ENCODE measurements at regions of chr1 and their contacts with region 1.

Region 1: DNA sequence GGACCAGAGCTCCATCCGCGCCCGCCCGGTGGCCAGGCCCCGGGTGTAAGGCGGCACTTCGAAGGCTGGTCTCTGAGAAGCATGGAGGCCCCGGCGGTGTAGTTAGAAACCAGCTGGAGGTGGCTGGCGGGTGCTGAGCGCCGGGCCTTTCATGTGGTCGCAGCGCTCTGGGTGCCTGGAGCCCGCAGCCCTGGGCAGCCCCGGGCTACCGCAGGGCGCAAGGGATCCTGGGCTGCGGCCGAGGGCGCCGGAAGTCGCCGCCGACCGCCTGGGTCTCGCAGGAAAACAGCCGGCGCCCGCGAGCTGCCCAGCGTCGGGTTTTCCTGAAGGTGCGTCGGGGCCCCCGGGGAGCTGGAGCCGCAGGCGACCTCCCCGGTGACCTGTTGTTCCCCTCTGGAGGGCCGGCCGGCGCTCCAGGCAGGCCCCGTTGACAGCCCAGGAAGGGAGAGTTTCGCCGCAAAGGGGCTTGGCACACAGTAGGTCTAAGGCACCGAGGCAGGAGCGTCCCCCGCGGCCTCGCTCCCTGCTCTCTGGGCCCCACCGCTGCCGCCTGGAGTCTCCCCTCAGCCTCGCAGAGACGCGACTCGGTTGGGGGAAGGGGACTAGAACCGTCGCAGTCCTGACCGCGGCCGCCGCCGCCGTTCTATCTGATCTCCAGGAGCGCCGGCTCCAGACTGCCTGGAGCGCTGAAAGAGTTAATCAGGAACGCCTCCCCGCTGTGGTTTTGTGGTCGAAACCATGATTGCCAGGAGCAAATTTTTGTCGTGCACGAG is 2.7 kb downstream of the GRHL3 start:
- DNase-seq: peak; percentile 83
- H3K4me3 Mint-ChIP-seq: peak overlapping the region; percentile 63
- H3K27ac Mint-ChIP-seq: peak overlapping the region; percentile 28
- H3K4me1 Mint-ChIP-seq: peaks cover 38% of the 10 kb centered on the region
- H3K27me3 Mint-ChIP-seq: peaks cover 92% of the 10 kb centered on the region

Region 2: GRCh38 chr1:24235921-24236781 is 85.7 kb before region 1 on chr1:
- CTCF ChIA-PET with region 1: no interaction called
- POLR2A ChIA-PET with region 1: no interaction called
- DNase-seq: no peak
- H3K4me3 Mint-ChIP-seq: no peak overlapping the region
- H3K27ac Mint-ChIP-seq: no peak overlapping the region
- H3K4me1 Mint-ChIP-seq: no peaks in the 10 kb centered on the region
- H3K27me3 Mint-ChIP-seq: peaks cover 13% of the 10 kb centered on the region

Region 3: GRCh38 chr1:24253569-24253968 is 68.3 kb before region 1 on chr1:
- CTCF ChIA-PET with region 1: no interaction called
- POLR2A ChIA-PET with region 1: no interaction called
- DNase-seq: no peak
- H3K4me3 Mint-ChIP-seq: no peak overlapping the region
- H3K27ac Mint-ChIP-seq: no peak overlapping the region
- H3K4me1 Mint-ChIP-seq: peaks cover 6% of the 10 kb centered on the region
- H3K27me3 Mint-ChIP-seq: peaks cover 17% of the 10 kb centered on the region

Region 4: GRCh38 chr1:24349891-24350290 is 28.0 kb after region 1 on chr1:
- CTCF ChIA-PET with region 1: interaction called, 12 read pairs
- POLR2A ChIA-PET with region 1: no interaction called
- DNase-seq: no peak
- H3K4me3 Mint-ChIP-seq: no peak overlapping the region
- H3K27ac Mint-ChIP-seq: no peak overlapping the region
- H3K4me1 Mint-ChIP-seq: peaks cover 32% of the 10 kb centered on the region
- H3K27me3 Mint-ChIP-seq: peaks cover 6% of the 10 kb centered on the region